Activated CD4-positive, alpha-beta T cell treated with anti-CD3 and anti-CD28 coated beads, Interleukin-2, amount 10 ng/mL, durations not matched to agents 7 days and 5 days (primary cell): ENCODE measurements at regions of chr1 and their contacts with region 1.

Region 1: GRCh38 chr1:44799770-44800584 is at the start of gene PLK3:
- DNase-seq: peak; percentile 99
- H3K4me3 Mint-ChIP-seq: peak within 1 kb of the TSS; percentile 80
- H3K27ac Mint-ChIP-seq: peak within 1 kb of the TSS; percentile 100
- H3K4me1 Mint-ChIP-seq: peaks cover 44% of the 10 kb centered on the region
- H3K27me3 Mint-ChIP-seq: no peaks in the 10 kb centered on the region
- total RNA-seq, gene PLK3: 54.3 to 57.5 TPM

Region 2: DNA sequence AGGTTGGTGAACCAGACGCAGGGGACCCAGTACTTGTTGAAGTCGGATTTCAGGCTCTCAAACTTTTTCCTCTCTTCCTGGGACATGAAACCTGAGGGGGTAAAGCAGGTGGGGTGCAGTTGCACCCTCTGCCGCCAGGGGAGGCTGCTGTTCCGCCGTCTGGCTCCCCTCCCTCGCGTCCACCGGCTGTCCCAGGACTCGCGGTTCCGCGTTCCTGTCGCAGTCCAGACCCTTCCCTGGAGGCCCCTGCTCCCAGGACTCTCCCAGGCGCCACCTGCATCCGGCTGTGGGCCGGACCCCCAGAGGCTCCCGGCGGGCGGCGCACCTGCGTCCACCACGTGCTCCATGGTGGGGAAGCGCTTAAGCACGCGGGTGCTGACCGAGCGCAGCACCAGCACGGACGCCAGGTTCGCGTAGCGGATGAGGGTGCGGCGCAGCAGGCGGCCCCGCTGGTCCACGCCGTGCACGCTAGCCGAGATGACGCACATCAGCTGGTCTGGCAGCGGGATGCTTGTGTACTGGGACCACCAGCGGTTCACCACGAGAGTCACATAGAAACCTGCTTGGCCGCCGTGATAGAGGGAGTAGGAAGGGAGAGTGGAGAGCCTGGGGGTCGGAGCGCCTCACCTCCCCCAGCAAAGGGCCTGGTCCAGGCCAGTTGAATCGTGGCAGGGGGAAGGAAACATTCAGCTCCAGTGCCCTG is 13.7 kb before region 1 on chr1:
- CTCF ChIA-PET with region 1: interaction called, 18 read pairs
- POLR2A ChIA-PET with region 1: interaction called, 3 read pairs
- DNase-seq: peak; percentile 72
- H3K4me3 Mint-ChIP-seq: peak overlapping the region; percentile 56
- H3K27ac Mint-ChIP-seq: peak overlapping the region; percentile 78
- H3K4me1 Mint-ChIP-seq: peaks cover 35% of the 10 kb centered on the region
- H3K27me3 Mint-ChIP-seq: no peaks in the 10 kb centered on the region

Region 3: GRCh38 chr1:44812822-44813543 is 13.0 kb after region 1 on chr1:
- CTCF ChIA-PET with region 1: interaction called, 33 read pairs
- POLR2A ChIA-PET with region 1: interaction called, 22 read pairs
- DNase-seq: no peak
- H3K4me3 Mint-ChIP-seq: peak overlapping the region; percentile 85
- H3K27ac Mint-ChIP-seq: peak overlapping the region; percentile 76
- H3K4me1 Mint-ChIP-seq: peaks cover 71% of the 10 kb centered on the region
- H3K27me3 Mint-ChIP-seq: no peaks in the 10 kb centered on the region

Region 4: GRCh38 chr1:44819608-44820327 is 19.8 kb after region 1 on chr1:
- CTCF ChIA-PET with region 1: interaction called, 23 read pairs
- POLR2A ChIA-PET with region 1: interaction called, 33 read pairs
- DNase-seq: peak; percentile 86
- H3K4me3 Mint-ChIP-seq: peak overlapping the region; percentile 87
- H3K27ac Mint-ChIP-seq: peak overlapping the region; percentile 100
- H3K4me1 Mint-ChIP-seq: peaks cover 48% of the 10 kb centered on the region
- H3K27me3 Mint-ChIP-seq: peaks cover 2% of the 10 kb centered on the region